T-cell (primary cell): ENCODE measurements at regions of chr2 and their contacts with region 1.

Region 1: DNA sequence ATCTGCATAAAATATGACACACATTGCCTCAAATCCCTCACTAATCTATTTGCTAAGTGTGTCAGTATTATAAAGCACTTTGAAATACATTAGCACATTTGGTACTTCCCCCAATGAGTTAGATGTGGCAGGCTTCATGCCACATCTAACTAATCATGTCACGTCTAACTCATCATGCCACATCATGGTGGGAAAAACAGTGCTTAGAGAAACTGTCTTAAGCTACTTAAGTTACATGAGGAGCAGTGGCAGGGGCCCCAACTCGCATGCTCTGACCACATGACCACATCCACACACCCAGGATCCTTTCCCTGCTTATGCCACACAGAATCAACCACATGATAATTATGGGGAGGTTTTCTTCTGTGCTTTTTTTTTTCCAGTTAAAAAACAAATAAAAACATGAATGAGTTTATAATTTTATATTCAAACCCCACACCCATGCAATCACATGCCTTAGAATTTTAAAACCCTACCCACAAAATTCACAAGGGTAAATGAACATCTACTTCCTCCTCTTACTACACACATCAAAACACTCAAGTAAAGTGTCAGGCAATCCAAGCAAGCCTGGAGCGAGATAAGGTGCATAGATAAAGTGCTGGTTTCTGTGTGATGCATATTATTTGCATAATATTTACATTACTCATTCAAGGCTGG is 1.6 kb downstream of the ABCA12 start:
- DNase-seq: no peak
- ATAC-seq: no peak
- H3K4me3 ChIP-seq: no peak overlapping the region
- H3K4me3 Mint-ChIP-seq: no peak overlapping the region
- H3K27ac ChIP-seq: no peak overlapping the region
- H3K27ac Mint-ChIP-seq: no peak overlapping the region
- H3K4me1 ChIP-seq: no peaks in the 10 kb centered on the region
- H3K4me1 Mint-ChIP-seq: no peaks in the 10 kb centered on the region
- H3K27me3 ChIP-seq: peaks cover 0 to 3% of the 10 kb centered on the region in 2 experiments
- H3K27me3 Mint-ChIP-seq: peaks cover 8 to 21% of the 10 kb centered on the region in 2 donors

Region 2: DNA sequence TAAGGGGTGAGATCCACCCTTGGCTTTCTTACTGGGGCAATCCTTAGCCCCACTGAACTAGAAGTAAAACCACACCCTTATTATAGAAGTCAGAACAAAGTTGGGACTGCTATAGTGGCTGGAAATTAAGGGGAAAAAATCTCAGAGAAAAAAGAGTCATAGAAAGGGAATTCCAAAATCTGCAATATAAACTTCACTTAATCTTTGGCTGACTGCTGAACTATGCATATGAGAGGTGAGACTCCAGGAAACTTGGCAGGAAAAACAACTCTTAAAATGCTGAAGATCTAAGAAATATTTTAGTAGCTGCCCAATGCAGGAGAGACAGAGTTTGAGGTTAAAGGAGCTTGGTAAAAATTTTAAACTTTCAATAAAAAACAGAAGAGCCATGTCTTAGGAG is 500.9 kb after region 1 on chr2:
- CTCF ChIA-PET with region 1: no interaction called
- POLR2A ChIA-PET with region 1: no interaction called
- DNase-seq: no peak
- ATAC-seq: no peak
- H3K4me3 ChIP-seq: no peak overlapping the region
- H3K4me3 Mint-ChIP-seq: no peak overlapping the region
- H3K27ac ChIP-seq: no peak overlapping the region
- H3K27ac Mint-ChIP-seq: no peak overlapping the region
- H3K4me1 ChIP-seq: no peaks in the 10 kb centered on the region
- H3K4me1 Mint-ChIP-seq: no peaks in the 10 kb centered on the region
- H3K27me3 ChIP-seq: no peaks in the 10 kb centered on the region
- H3K27me3 Mint-ChIP-seq: peaks cover 5 to 6% of the 10 kb centered on the region in 2 donors

Region 3: GRCh38 chr2:215652388-215652787 is 515.6 kb after region 1 on chr2:
- CTCF ChIA-PET with region 1: interaction called in 1 of 2 experiments, 10 read pairs
- POLR2A ChIA-PET with region 1: no interaction called
- DNase-seq: no peak
- ATAC-seq: no peak
- H3K4me3 ChIP-seq: no peak overlapping the region
- H3K4me3 Mint-ChIP-seq: no peak overlapping the region
- H3K27ac ChIP-seq: no peak overlapping the region
- H3K27ac Mint-ChIP-seq: no peak overlapping the region
- H3K4me1 ChIP-seq: no peaks in the 10 kb centered on the region
- H3K4me1 Mint-ChIP-seq: no peaks in the 10 kb centered on the region
- H3K27me3 ChIP-seq: no peaks in the 10 kb centered on the region
- H3K27me3 Mint-ChIP-seq: peaks cover 0 to 11% of the 10 kb centered on the region in 2 donors